OCI-LY7 (cell line): ENCODE measurements at regions of chr1 and their contacts with region 1.

Region 1: DNA sequence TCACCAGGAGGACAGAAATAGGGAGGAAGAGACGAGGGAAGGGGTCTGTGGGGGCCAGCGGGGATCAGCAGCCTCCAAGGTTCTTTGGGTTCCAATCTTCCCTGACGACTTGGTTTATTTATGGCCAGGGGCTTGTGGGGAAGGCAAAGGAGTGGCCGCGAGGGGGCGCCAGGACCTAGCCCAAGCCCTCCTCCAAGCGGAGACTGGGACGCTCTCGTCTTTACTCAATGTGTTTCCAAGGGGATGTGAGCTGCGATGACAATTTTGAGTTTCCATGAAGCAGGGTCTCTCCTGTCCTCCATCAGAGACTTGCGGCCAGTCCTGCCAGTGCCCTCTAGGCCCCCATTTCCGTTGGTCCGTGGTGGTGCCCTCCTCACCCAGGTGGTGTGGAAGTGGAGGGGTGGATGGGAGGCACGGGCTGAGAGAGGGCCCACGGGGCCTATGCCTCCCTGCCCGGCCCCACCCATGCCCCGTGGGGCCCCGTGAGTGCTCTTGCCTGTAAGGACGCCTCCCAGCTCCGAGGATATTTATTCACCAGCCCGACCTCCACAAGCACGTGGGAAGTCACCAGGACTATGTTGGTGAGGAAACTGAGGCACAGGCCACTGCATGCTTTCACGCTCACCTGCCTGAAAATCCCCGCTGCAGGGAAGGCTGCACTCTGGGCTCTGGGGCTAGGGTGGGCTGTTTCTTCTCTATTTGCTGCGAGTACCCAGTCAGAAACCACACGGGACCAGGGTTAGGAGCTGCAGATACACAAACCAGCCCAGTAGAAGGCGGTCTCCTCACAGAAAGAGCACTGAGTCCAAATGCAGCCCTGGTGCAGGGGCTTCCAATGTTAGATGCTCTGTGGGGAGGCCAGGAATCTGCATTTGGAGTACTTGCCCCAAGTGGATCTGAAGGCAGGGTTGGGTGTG is 26.5 kb downstream of the DMRTB1 start:
- DNase-seq: peak; percentile 64
- H3K4me3 ChIP-seq: no peak overlapping the region
- H3K27ac ChIP-seq: no peak overlapping the region
- H3K4me1 ChIP-seq: no peaks in the 10 kb centered on the region
- CTCF ChIP-seq: peak; percentile 88

Region 2: GRCh38 chr1:53754484-53755312 is 269.0 kb after region 1 on chr1:
- CTCF ChIA-PET with region 1: no interaction called
- POLR2A ChIA-PET with region 1: no interaction called
- intact Hi-C with region 1: loop called (anchors 1 kb)
- DNase-seq: peak; percentile 47
- H3K4me3 ChIP-seq: no peak overlapping the region
- H3K27ac ChIP-seq: no peak overlapping the region
- H3K4me1 ChIP-seq: no peaks in the 10 kb centered on the region
- CTCF ChIP-seq: peak; percentile 87